Sigmoid colon (tissue), 7 donors: ENCODE measurements at regions of chr1 and their contacts with region 1.

Region 1: GRCh38 chr1:55519937-55520683 is 304.9 kb upstream of the USP24 start:
- DNase-seq: no peak
- H3K4me3 ChIP-seq: no peak overlapping the region
- H3K27ac ChIP-seq: peak overlapping the region in 3 of 4 donors; percentile 26 to 67 (median 56)
- H3K4me1 ChIP-seq: peaks cover 0 to 26% (median 17%) of the 10 kb centered on the region in 4 donors
- H3K27me3 ChIP-seq: no peaks in the 10 kb centered on the region
- CTCF ChIP-seq: no peak
- EP300 ChIP-seq: peak; percentile 8 to 70 (median 34)
- POLR2A ChIP-seq: no peak

Region 2: DNA sequence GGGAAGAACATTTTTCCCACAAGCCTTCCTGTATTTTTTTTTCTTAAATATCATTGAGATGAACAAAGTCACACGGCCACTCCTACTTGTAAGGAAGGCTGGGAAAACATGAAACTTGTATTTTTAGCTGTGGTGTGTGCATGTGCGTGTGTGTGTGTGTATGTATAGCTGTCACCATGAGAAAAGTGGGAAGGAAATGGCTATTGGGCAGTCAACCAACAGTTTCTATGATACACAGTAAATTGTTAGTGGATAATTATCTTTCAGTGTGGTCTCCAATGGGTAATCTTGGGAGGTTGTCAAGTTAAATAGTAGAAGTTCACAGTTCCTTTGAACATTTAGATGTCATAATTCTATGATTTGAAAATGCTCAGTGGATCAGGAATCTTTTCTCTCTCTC is 172.2 kb before region 1 on chr1:
- intact Hi-C with region 1: no loop called
- DNase-seq: no peak
- H3K4me3 ChIP-seq: no peak overlapping the region
- H3K27ac ChIP-seq: no peak overlapping the region
- H3K4me1 ChIP-seq: no peaks in the 10 kb centered on the region
- H3K27me3 ChIP-seq: peaks cover 0 to 3% (median 0%) of the 10 kb centered on the region in 3 donors
- CTCF ChIP-seq: no peak
- EP300 ChIP-seq: no peak
- POLR2A ChIP-seq: no peak

Region 3: GRCh38 chr1:55468142-55468795 is 51.8 kb before region 1 on chr1:
- intact Hi-C with region 1: loop called (anchors 5 kb)
- DNase-seq: no peak
- H3K4me3 ChIP-seq: no peak overlapping the region
- H3K27ac ChIP-seq: no peak overlapping the region
- H3K4me1 ChIP-seq: peaks cover 0 to 9% (median 2%) of the 10 kb centered on the region in 4 donors
- H3K27me3 ChIP-seq: no peaks in the 10 kb centered on the region
- CTCF ChIP-seq: no peak
- EP300 ChIP-seq: no peak
- POLR2A ChIP-seq: no peak

Region 4: DNA sequence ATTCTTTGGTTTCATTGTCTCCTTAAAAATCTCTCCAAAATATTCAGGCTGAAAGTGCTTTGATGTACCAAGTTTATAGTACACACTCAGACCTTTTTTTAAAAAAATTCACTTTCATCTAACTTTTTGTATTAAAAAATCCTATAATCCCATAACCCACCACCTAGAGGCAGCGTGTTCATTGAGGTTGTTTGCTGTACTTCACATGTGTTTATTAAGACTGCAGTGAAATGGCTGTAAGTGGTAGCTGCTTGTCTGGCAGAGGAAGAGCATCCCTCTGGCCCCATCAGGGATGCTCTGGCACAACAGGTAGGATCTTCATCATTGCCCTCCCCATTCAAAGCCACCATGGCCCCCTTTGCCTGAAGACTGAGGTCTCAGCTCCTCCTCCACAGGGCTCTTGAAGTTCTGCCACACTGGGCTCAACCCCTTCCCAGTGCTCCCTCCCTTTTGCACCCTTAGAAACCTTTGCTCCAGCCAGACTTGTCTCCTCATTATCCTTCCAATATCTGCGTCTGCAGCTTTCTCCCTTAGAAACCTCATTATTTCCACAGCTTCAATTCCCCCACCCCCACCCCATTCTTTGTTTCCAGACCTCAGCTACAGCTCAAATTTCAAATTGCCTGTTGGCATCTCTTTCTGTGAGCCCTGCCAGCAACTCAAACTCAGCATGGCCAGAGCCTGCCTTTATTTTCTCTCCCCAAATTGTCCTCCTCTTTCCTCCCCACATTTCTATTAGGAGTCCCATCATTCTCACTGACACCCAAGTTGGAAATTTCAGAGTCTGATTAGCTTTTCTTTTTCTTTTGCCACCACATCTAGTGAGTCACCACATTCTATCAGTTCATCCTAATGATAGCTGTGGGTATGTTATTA is 64.7 kb after region 1 on chr1:
- intact Hi-C with region 1: loop called (anchors 2 kb)
- DNase-seq: no peak
- H3K4me3 ChIP-seq: no peak overlapping the region
- H3K27ac ChIP-seq: peak overlapping the region in 2 of 4 donors; percentile 1 to 33
- H3K4me1 ChIP-seq: peaks cover 0 to 33% (median 17%) of the 10 kb centered on the region in 4 donors
- H3K27me3 ChIP-seq: no peaks in the 10 kb centered on the region
- CTCF ChIP-seq: no peak
- EP300 ChIP-seq: no peak
- POLR2A ChIP-seq: no peak